ENCODE measurements at regions of chr10 and their contacts with region 1.

Region 1: GRCh38 chr10:86535057-86535882 is 13.7 kb upstream of the WAPL start:
- DNase-seq: no peak
- H3K4me3 ChIP-seq: peak overlapping the region; percentile 42
- H3K27me3 ChIP-seq: no peaks in the 10 kb centered on the region
- CTCF ChIP-seq: no peak

Region 2: DNA sequence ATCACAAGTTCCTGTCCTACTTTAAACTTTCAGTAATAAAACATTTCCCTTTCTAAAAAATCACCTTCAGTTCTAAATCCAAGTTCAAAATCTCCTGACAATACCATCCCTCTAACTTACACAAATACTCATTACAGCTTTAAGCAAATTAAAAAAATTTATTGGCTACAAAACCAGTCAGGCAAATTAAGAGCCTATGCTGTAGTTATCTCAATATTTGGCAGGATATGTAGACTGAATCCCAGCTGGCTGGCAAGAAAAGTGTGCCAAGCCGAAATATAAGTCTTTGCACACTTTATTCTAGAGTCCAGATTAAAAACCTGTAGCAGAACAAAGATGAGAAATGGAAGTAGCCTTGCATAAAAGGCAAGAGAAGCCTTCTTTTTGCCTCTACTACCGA is 23.1 kb before region 1 on chr10:
- CTCF ChIA-PET with region 1: no interaction called
- POLR2A ChIA-PET with region 1: no interaction called
- DNase-seq: no peak
- H3K4me3 ChIP-seq: no peak overlapping the region
- H3K27me3 ChIP-seq: no peaks in the 10 kb centered on the region
- CTCF ChIP-seq: no peak

Region 3: DNA sequence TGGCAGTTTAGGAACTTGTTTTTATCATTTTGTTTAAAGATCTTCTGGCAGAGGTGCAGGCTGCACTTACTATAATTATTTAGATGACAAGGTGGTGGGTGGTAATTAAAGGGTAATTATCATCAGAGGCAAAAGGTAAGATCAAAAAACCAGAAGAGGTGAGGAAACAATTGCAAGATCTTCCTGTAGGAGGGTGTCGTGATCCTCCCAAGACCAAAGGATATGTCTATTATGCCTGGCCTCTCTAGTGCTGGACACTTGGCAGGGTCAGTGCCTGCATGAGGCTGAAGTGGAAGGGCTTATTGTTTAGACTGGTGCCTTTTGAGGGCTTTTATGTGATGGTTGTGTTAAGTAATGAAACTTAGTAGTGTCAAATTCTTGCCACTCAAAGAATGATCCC is 11.9 kb before region 1 on chr10:
- CTCF ChIA-PET with region 1: interaction called, 15 read pairs
- POLR2A ChIA-PET with region 1: no interaction called
- DNase-seq: no peak
- H3K4me3 ChIP-seq: no peak overlapping the region
- H3K27me3 ChIP-seq: no peaks in the 10 kb centered on the region
- CTCF ChIP-seq: peak; percentile 40; the same call in 1 of the 2 replicates

Region 4: GRCh38 chr10:86611386-86611785 is 76.1 kb after region 1 on chr10:
- CTCF ChIA-PET with region 1: no interaction called
- POLR2A ChIA-PET with region 1: no interaction called
- DNase-seq: no peak
- H3K4me3 ChIP-seq: no peak overlapping the region
- H3K27me3 ChIP-seq: no peaks in the 10 kb centered on the region
- CTCF ChIP-seq: no peak

Measured in BJ (cell line).